Posterior vena cava (tissue), 2 donors: ENCODE measurements at regions of chr5 and their contacts with region 1.

Region 1: GRCh38 chr5:54517174-54518092 is at the start of gene SNX18:
- DNase-seq: peak; percentile 98
- total RNA-seq, gene SNX18: 50.3 to 55.6 TPM

Region 2: DNA sequence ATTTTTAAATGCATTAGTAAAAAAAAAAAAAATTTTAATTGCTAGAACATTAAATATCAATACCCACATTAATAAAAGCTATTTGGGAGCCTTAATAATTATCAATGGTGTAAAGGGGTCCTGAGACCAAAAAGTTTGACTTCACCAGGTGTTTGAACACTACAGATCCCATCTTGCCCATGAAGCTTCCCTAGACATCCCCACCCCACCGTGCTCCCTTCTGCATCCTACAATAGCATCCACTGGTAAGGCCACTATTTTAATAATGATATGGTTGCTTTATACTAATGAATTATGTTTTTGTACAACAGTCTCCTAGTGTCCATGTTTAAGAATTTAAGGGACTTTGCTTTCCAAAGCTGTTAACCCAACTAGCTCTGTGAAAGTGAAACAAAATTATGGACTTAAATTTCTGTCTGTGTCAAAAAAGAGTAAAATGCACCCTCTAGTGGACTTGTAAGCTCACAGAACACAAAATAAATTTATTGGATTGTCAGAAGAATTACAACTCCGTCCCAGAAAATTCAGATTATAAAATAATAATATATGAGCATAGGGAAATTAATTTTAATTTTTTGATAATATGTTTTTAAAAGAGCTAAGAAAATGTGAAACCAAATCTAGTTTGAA is 283.0 kb before region 1 on chr5:
- intact Hi-C with region 1: no loop called
- DNase-seq: no peak

Region 3: GRCh38 chr5:54547711-54548250 is 30.3 kb after region 1 on chr5:
- intact Hi-C with region 1: no loop called
- DNase-seq: no peak

Region 4: DNA sequence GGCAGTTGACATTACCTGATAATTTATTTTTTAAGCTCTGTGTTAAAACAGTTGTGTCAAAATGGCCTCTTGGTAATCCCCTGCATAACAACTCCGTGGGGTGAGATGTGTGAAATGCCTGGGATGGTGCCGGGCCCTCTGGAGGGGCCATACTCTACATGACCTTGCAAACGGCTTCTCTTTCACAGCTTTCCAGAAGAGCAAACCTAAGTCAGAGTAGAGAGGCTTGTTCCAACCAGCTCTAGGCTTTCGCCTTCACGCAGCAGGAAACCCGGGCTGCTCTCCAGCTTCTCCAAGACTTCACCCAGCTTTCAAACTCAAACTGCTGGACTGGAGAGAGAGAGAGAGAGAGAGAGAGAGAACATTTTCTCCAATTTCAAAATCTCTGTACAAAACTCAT is 120.2 kb after region 1 on chr5:
- intact Hi-C with region 1: loop called (anchors 10 kb)
- DNase-seq: no peak

Region 5: DNA sequence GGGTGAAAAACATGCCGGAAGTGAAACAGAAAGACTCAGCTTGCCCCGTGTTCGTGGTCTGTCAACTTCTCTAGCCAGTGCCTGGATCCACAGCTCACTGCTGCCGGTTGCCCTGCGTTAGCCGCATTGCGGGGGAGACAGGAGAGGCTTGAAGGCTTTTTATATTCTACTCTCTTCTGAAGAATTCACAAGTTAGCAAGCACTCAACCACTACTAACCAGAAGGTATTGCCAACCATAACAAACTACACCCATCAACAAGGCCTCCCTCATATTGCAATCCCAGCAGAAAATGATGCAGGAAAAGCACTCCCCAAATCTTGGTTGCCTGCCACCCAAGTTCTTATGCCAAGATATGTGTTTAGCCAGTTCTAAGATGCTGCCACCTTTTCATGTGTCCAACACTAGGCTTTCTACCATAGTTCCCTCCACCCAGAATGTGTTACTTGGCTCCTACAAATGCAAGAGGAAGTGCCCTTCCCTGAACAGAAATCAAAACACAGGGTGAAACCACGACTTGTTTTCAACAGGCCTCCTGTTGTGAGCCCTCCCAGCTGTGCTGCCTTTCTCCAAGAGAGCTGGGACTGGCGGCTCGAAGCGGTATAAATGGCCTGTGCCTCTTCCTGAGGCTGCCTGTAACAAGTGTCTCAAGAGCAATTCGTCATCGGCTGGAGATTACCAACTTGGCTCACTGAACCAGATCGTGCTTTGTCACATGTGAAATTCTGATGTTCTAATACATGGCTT is 129.1 kb after region 1 on chr5:
- intact Hi-C with region 1: loop called in 1 of 2 experiments (anchors 10 kb)
- DNase-seq: peak; percentile 90

Region 6: GRCh38 chr5:54696931-54697330 is 179.5 kb after region 1 on chr5:
- intact Hi-C with region 1: loop called in 1 of 2 experiments (anchors 5 kb)
- DNase-seq: no peak

Region 7: DNA sequence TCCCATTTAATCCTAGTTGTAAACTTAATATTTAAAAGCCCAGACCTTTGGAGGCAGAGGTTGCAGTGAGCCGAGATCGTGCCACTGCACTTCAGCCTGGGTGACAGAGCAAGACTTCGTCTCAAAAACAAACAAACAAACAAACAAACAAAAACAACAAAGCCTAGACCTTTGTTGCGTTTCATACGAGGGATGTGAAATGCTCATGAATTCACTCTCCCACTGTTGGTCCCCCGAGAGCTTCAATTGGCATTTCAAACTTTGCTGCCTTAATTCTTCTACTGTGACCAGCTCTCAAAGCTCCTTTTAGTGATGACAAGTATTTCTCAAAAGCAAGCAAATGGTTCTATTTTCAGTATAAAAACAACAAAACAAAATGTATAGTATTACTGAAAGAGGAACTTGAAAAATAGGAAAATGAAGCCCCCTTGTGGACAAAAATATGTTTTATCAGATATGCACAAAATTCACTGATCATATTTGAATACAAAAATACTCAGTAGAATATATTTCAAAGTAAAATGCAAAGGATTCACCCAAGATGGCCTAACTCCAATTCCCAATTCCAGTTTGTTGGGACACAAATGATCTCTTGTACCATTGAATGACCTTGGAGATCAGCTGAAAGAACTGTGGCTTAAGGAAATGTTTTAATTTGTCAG is 327.6 kb after region 1 on chr5:
- intact Hi-C with region 1: loop called (anchors 2 to 10 kb)
- DNase-seq: no peak

Region 8: GRCh38 chr5:54867310-54867944 is 350.0 kb after region 1 on chr5:
- intact Hi-C with region 1: loop called in 1 of 2 experiments (anchors 5 kb)
- DNase-seq: no peak